ENCODE measurements at regions of chr5 and their contacts with region 1.

Region 1: GRCh38 chr5:96876292-96876850 is at the start of gene ERAP2:
- DNase-seq: no peak
- H3K4me3 Mint-ChIP-seq: peak within 1 kb of the TSS; percentile 93
- H3K27ac Mint-ChIP-seq: peak within 1 kb of the TSS; percentile 99
- H3K4me1 Mint-ChIP-seq: peaks cover 66% of the 10 kb centered on the region
- H3K27me3 Mint-ChIP-seq: no peaks in the 10 kb centered on the region
- total RNA-seq, gene ERAP2: 52.9 and 54.4 TPM in 2 replicates

Region 2: DNA sequence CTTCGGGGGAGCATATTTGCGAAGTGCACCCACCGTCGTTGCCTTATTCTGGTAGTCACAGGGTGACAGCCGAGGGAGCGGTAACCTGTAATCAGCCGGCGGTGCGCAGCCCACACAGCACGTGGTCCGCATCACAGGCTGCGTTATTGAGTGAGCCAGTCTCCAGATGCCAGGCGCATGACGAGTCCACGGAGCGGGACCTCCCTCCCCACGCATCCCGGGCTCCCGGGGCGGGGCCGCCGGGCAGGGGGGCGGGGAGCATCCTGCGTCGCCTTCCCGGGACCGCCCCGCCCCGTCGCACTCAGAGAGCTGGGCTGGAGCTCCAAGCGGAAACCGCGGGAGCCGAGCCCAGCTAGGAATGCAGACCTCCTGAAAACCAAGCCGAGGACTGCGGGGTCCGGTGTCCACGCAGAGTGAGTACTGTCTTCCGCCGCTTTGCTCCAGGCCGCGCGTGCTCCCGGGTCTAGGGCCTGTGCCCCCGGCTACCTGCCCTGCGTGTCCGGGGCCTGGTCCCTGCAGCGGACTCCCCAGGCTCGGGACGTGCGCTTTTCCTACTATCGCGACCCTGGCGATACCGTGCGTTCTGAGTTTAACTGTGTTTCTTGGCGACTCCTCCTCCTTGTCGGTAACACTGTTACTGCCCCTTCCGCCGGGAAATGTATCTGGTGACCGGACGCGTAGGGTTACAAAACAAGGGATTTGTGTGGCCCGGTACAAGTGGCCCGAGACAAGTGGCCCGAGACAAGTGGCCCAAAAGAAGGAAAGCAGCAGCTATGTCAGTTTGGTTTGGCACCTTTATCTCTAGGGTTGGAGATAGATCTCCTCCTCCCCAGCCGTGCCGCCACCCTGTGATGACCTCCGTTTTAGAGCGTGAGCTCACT is 173.6 kb before region 1 on chr5:
- intact Hi-C with region 1: loop called (anchors 5 kb)
- DNase-seq: peak; percentile 65
- H3K4me3 Mint-ChIP-seq: peak overlapping the region; percentile 91
- H3K27ac Mint-ChIP-seq: peak overlapping the region; percentile 92
- H3K4me1 Mint-ChIP-seq: peaks cover 31% of the 10 kb centered on the region
- H3K27me3 Mint-ChIP-seq: no peaks in the 10 kb centered on the region

Region 3: GRCh38 chr5:96807075-96807654 is 69.2 kb before region 1 on chr5:
- intact Hi-C with region 1: loop called (anchors 1 kb)
- DNase-seq: no peak
- H3K4me3 Mint-ChIP-seq: peak overlapping the region; percentile 99
- H3K27ac Mint-ChIP-seq: peak overlapping the region; percentile 95
- H3K4me1 Mint-ChIP-seq: peaks cover 81% of the 10 kb centered on the region
- H3K27me3 Mint-ChIP-seq: no peaks in the 10 kb centered on the region

Region 4: DNA sequence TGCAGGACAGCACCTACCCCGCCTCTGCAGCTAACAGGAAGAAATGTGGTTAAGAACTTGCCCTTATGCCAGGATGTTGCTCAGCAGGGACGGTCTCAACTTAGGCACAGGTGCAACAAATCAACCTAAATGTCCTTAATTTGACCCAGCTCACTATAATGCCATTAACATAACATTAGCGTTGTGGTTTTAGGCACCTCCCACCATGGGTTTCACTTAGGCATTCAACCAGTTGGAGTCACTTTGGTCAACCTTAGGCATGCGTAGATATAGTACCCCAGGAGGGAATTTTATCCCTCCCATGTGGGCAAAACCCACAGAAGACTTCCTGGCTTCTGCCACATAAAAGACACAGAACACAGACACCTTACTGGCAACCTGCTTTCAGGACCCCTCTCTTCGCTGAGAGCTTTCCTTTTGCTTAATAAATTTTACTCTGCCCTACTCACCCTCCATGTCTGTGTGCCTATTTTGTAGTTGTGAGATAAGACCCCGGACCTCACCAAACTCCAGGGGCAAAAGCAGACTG is 59.9 kb before region 1 on chr5:
- intact Hi-C with region 1: loop called (anchors 2 kb)
- DNase-seq: peak; percentile 37
- H3K4me3 Mint-ChIP-seq: peak overlapping the region; percentile 77
- H3K27ac Mint-ChIP-seq: peak overlapping the region; percentile 82
- H3K4me1 Mint-ChIP-seq: peaks cover 66% of the 10 kb centered on the region
- H3K27me3 Mint-ChIP-seq: peaks cover 2% of the 10 kb centered on the region

Region 5: GRCh38 chr5:96904054-96904931 is 27.9 kb after region 1 on chr5:
- intact Hi-C with region 1: no loop called
- DNase-seq: no peak
- H3K4me3 Mint-ChIP-seq: no peak overlapping the region
- H3K27ac Mint-ChIP-seq: no peak overlapping the region
- H3K4me1 Mint-ChIP-seq: peaks cover 15% of the 10 kb centered on the region
- H3K27me3 Mint-ChIP-seq: no peaks in the 10 kb centered on the region